ENCODE measurements at regions of chrX and their contacts with region 1.

Region 1: GRCh38 chrX:144801786-144802185 is 445.5 kb upstream of the SPANXN1 start:
- DNase-seq: peak; percentile 64 to 67
- H3K4me3 ChIP-seq: no peak overlapping the region
- H3K27ac ChIP-seq: peak overlapping the region; percentile 87
- H3K4me1 ChIP-seq: peaks cover 8% of the 10 kb centered on the region
- H3K27me3 ChIP-seq: no peaks in the 10 kb centered on the region
- CTCF ChIP-seq: no peak

Region 2: GRCh38 chrX:144840616-144841015 is 38.8 kb after region 1 on chrX:
- CTCF ChIA-PET with region 1: no interaction called
- POLR2A ChIA-PET with region 1: no interaction called
- intact Hi-C with region 1: loop called (anchors 1 kb)
- DNase-seq: peak in 1 of 2 experiments; percentile 14
- H3K4me3 ChIP-seq: no peak overlapping the region
- H3K27ac ChIP-seq: no peak overlapping the region
- H3K4me1 ChIP-seq: no peaks in the 10 kb centered on the region
- H3K27me3 ChIP-seq: no peaks in the 10 kb centered on the region
- CTCF ChIP-seq: no peak

Measured in PC-9 (cell line).